BJ (cell line): ENCODE measurements at regions of chr20 and their contacts with region 1.

Region 1: DNA sequence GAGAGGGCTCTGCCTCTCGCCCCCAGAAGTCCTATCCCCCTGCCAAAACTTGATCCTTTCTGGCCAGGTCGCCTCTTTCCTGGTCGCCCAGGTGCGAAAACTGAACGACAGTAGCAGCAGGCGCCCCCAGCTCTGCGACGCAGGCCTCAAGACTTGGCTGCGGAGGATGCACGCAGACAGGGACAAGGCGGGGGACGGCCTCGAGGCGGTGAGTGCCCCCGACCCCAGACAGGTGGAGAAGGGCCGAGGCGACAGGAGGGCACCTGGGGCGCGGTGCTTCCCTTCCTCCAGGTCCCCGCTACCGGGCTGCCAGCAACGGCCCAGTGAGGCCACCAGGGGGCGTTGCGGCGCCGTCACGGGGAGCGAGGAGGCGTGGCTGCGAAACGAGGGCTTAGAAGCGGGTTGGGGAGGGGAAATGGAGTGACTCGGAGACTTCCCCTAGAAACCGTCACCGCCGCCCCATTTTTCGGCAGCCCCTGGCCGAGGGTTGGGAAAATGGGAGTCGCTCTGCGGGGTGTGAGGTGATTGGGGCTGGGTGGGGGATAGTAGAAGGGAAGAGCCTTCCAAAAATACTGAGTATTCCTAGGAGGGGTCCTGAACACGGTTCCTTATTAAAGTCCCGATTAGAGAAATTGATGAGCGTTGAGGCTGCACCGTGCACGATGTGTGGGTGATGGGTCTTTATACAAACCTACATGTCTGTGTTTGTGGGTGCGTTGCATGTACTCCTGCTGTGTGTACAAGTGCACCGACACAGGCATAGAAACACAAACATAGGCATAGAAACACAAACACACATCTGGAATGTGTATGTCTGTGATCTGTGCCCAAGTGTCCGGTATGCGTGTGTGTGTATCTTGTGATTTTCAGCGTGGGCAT is 44.6 kb downstream of the ARHGAP40 start:
- DNase-seq: no peak
- H3K4me3 ChIP-seq: no peak overlapping the region
- H3K27me3 ChIP-seq: peaks cover 22% of the 10 kb centered on the region
- CTCF ChIP-seq: peak; percentile 95

Region 2: DNA sequence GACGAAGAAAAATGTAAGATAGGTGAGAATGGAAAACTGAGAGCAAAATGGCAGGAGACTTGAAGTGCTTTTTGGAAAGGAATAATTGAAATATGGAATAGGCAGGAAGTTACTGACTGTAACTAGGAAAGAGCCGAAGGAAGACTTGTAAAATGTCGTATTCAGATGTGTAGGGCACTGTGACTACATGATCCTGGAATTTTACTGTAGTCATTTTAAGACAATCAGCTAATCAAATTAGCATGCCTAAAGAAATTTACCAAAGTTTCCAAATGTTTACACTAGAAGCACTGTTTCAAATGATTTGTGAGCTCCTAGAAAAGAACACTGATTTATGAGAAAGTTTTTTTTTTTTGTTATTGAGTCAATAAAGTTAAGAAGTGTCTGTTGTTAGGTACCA is 86.5 kb before region 1 on chr20:
- CTCF ChIA-PET with region 1: no interaction called
- POLR2A ChIA-PET with region 1: no interaction called
- DNase-seq: peak; percentile 39
- H3K4me3 ChIP-seq: no peak overlapping the region
- H3K27me3 ChIP-seq: no peaks in the 10 kb centered on the region
- CTCF ChIP-seq: no peak

Region 3: DNA sequence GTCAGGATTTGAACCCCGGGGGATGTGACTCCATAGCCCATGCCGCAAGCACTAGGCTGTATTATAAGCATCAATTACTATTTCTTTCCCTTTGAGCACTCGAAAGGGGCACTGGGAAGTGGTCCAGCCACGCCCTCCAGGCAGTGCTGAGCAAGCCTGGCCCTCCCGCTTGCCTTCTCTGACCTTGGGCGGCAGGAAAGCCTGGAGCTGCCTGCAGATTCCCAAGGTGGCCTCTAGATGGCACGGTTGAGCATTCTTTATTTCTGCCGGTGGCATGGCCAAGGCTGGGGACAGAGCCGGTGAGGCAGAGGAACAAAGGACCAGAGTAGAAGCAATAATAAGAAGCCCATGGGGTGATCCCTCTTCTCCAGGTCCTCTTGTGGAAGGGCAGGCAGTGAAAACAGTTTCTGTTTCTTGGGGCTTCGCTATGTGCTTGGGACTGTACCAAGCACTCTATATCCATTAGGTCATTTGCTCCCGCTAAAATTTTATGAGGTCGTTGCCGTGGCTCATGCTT is 12.6 kb before region 1 on chr20:
- CTCF ChIA-PET with region 1: interaction called, 62 read pairs
- POLR2A ChIA-PET with region 1: no interaction called
- DNase-seq: no peak
- H3K4me3 ChIP-seq: no peak overlapping the region
- H3K27me3 ChIP-seq: peaks cover 1% of the 10 kb centered on the region; the same call in 1 of the 2 replicates
- CTCF ChIP-seq: peak; percentile 95

Region 4: DNA sequence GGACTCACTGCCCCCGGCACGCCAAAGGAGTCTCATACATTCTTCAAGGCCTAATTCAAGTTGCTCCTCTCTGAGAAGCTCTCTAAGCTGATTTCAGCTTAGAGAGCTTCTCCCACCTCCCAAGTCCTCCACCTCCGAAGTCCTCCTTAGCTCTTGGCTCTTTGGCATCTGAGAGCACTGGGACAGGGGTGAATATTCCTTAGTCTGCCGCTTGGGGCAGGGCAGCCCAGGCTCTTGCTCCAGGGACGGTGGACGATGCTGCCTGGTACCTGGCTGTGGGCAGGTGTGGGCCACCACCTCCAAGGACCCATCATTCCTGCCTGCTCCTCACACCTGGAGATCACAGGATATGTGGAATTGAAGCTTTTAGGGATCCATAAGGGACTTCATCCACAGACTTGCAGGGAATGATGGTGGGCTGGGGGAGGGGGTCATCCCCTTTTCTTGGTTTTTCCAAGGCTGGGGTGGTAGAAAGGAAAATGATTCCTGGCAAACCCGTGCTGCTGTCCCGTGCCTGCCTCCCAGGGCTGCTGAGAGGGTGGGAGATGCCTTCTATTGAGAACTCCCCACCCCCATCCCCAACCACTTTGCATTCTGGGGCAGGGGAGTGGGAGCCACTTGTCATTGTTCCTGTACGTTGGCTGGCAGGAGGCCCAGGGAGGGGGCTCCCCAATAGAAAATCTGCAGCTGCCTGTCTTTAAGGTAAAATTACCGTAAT is 12.8 kb after region 1 on chr20:
- CTCF ChIA-PET with region 1: interaction called, 15 read pairs
- POLR2A ChIA-PET with region 1: no interaction called
- DNase-seq: no peak
- H3K4me3 ChIP-seq: no peak overlapping the region
- H3K27me3 ChIP-seq: no peaks in the 10 kb centered on the region
- CTCF ChIP-seq: peak; percentile 63

Region 5: GRCh38 chr20:38748097-38748860 is 102.1 kb after region 1 on chr20 and contains the start of gene ACTR5:
- CTCF ChIA-PET with region 1: interaction called, 88 read pairs
- POLR2A ChIA-PET with region 1: no interaction called
- DNase-seq: peak; percentile 46
- H3K4me3 ChIP-seq: peak within 1 kb of the TSS; percentile 63
- H3K27me3 ChIP-seq: peaks cover 2% of the 10 kb centered on the region
- CTCF ChIP-seq: no peak
- polyA plus RNA-seq, gene ACTR5: 4.0 and 5.4 TPM in 2 replicates

Region 6: DNA sequence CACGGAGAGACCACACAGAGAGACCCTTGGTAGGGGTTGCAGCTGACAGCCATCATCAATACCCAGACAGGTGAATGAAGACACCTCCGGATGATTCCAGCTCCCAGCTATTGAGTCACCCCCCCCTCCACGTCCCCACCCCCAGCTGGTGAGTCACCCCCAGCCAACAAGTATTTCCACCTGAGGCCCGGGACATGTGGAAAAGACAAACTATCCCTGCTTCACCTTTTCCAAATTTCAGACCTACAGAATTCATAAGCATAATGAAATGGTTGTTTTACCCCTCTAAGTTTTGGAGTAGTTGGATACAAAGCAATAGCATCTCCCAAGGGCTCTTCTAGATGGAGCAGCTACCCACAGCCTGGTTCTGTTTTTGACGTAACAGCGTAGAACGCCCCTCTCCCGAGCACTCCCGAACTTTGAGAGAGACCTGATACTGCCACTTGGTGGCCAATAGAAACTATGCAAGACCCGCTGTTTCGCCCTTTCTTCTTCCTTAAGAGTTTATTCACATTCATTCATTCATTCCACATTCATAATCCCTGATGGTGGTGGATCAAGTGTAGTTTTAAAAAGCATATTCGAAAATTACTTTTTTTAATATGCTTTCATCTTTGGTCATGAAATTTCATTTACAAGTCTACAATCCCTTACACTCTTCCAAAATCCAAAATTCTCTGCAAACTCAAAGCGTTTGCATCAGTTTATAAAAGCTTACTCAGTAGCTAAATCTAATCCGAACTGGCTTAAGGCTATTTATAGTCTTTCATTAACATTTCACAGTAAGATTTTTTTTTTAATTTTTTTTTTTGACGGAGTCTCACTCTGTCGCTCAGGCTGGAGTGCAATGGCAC is 144.2 kb after region 1 on chr20:
- CTCF ChIA-PET with region 1: interaction called, 27 read pairs
- POLR2A ChIA-PET with region 1: no interaction called
- DNase-seq: no peak
- H3K4me3 ChIP-seq: no peak overlapping the region
- H3K27me3 ChIP-seq: no peaks in the 10 kb centered on the region; the same call in none of the 2 replicates
- CTCF ChIP-seq: peak; percentile 66

Region 7: GRCh38 chr20:38893565-38894090 is 247.4 kb after region 1 on chr20:
- CTCF ChIA-PET with region 1: interaction called, 10 read pairs
- POLR2A ChIA-PET with region 1: no interaction called
- DNase-seq: no peak
- H3K4me3 ChIP-seq: no peak overlapping the region
- H3K27me3 ChIP-seq: peaks cover 24% of the 10 kb centered on the region
- CTCF ChIP-seq: peak; percentile 97

Region 8: GRCh38 chr20:38973645-38974044 is 327.4 kb after region 1 on chr20:
- CTCF ChIA-PET with region 1: no interaction called
- POLR2A ChIA-PET with region 1: no interaction called
- DNase-seq: no peak
- H3K4me3 ChIP-seq: no peak overlapping the region
- H3K27me3 ChIP-seq: no peaks in the 10 kb centered on the region
- CTCF ChIP-seq: no peak